ENCODE measurements at regions of chr6 and their contacts with region 1.

Region 1: GRCh38 chr6:25788305-25788922 is 33.9 kb downstream of the SLC17A4 start:
- DNase-seq: peak; percentile 35
- ATAC-seq: peak; percentile 38 to 44

Region 2: DNA sequence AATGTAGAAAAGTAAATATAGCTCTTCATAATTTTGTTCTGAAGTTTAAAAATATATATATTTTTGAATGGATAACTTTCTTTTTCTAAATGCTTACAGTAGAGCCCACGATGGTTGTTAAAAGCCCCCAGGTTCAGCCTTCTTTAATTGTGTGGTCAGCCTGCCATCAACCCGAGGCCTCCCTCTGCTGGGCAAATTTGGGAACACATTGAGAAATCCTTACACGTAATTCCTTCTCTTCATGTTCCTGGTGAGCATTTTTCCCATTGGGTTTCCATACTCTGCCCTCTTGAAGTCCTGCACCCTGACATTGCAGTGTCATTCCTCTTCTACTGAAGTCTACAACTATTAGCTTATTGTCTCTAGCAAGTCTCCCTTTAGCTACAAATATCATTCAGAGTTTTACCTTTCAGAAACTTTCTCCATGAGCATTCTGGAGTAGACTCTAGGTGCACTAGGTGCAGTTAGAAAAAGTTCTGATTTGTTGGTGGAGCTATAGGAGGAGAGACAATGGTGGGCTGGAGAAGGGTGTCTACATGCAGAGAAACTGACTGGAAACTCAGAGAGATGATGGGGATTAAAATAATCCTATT is 214.8 kb after region 1 on chr6:
- intact Hi-C with region 1: loop called in 1 of 2 experiments (anchors 10 kb)
- DNase-seq: peak; percentile 42
- ATAC-seq: peak in 1 of 2 donors; percentile 62

Region 3: DNA sequence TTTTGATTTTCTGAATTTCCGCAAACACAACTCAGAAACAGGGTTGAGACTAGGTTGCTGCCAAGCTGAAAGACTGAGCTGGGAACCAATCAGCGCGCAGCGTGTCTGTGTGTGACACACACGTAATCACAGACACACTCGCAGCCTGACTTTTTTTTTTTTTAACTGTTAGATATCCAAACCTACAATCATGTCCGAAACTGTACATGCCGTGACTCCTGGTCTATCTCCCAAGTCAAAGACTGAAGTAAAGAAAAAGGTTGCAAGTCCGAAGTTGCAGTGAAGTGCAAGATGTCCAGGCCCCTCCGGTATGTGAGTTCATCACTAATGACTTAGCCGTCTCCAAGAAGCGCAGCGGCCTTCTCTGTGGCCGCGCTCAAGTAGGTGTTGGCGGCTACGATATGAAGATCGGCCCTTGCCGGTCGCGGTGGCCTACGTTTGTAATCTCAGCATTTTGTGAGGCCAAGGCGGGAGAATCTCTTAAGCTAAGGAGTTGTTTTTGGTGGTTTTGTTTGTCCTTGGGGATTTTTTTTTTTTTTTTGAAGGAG is 407.0 kb after region 1 on chr6:
- intact Hi-C with region 1: no loop called
- DNase-seq: peak; percentile 93
- ATAC-seq: peak; percentile 74 to 79

Measured in left cardiac atrium (tissue), 4 donors.